ENCODE measurements at regions of chr1 and their contacts with region 1.

Region 1: GRCh38 chr1:153946622-153947241 is at the start of gene DENND4B:
- DNase-seq: no peak
- H3K4me3 ChIP-seq: peak within 1 kb of the TSS; percentile 86
- H3K27ac ChIP-seq: peak within 1 kb of the TSS; percentile 61
- H3K27me3 ChIP-seq: no peaks in the 10 kb centered on the region
- CTCF ChIP-seq: peak; percentile 90
- polyA plus RNA-seq, gene DENND4B: 10.3 and 13.3 TPM in 2 replicates

Region 2: DNA sequence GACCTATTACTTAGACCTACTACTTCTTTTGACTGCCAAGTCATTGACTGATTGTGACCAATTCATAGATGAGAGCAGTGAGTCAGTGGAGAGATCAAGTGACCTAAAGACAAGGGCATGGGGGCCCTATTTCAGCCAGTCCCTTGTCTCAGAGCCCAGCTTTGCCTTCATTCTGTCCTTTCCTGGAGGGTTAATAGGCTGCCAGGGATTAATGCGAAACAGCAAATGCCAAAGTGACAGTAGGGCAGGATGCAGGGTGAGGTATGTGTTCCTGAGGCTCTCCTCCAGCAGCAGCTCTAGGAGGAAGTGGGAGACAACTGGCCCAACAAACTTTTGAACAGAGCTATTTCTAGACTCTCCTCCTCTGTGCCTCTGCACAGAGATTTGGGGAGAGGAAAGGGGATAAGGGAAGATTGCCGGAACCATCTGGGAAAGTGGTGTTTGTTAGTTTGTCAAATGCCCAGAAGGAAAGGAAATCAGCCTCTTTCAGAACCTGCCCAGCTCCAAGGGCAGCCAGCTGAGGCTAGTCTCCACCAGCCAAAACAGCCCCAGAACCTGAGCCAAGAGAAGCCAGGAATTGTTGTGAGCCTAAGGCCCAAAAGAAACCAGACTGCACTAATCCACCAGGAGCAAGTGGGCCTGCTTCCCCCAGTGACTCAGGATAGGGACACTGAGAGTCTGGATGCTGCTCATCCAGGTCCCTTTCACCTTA is 392.7 kb before region 1 on chr1:
- CTCF ChIA-PET with region 1: interaction called, 10 read pairs
- POLR2A ChIA-PET with region 1: no interaction called
- DNase-seq: no peak
- H3K4me3 ChIP-seq: no peak overlapping the region
- H3K27ac ChIP-seq: peak overlapping the region; percentile 47
- H3K27me3 ChIP-seq: no peaks in the 10 kb centered on the region
- CTCF ChIP-seq: no peak

Region 3: DNA sequence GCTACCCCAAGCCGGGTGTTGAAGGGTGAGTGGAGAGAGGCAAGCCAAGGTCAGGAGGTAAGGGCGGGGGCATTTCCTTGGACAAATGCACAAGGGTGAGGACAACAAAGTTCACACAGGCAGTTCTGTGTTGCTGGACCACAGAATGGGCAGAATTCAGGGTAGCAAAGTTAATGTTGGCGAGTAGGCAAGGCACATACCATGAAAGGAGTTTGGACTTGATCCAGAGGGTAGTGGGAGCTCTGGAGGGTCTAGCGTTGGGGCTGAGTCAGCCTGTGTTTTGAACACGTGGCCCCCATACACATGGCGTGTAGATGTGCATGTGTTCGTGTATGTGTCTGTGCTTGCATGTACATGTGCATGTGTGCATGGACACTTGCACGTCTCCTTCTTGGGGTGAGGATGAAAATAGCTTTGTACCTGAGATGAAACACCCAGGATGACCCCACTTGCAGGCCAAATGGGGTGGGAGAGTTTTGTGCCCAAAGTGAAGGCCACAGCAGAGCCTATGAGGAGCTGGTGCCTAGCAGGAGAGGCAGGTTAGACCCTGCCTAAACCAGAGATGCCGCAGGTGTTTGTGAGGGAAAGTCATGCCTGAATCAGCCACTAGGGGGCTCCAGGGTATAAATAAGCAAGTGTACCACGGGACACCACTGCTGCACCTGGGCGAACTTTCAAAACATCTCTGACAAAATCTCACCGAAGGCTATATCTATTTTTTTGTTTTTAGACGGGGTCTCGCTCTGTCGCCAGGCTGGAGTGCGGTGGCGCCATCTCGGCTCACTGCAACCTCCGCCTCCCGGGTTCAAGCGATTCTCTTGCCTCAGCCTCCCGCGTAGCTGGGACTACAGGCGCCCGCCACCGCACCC is 149.7 kb before region 1 on chr1:
- CTCF ChIA-PET with region 1: interaction called, 19 read pairs
- POLR2A ChIA-PET with region 1: no interaction called
- DNase-seq: peak; percentile 21
- H3K4me3 ChIP-seq: no peak overlapping the region
- H3K27ac ChIP-seq: no peak overlapping the region
- H3K27me3 ChIP-seq: no peaks in the 10 kb centered on the region
- CTCF ChIP-seq: peak; percentile 82

Region 4: DNA sequence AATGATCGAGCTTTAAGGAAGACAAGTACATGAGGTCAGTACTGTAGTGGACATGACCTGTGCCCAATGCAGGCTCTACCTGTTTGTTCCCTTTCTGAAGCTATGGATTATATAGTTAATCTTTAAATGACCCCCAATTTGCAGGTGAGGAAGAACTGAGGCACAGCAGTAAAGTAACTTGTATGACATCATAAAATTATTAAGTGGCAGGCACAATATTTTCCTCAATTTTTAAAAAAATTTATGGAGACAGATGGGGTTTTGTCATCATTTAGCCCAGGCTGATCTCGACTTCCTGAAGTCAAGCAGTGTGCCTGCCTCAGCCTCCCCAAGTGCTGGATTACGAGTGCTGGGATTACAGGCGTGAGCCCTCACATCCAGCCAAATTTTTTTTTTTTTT is 20.3 kb before region 1 on chr1:
- CTCF ChIA-PET with region 1: interaction called, 10 read pairs
- POLR2A ChIA-PET with region 1: interaction called, 5 read pairs
- DNase-seq: no peak
- H3K4me3 ChIP-seq: no peak overlapping the region
- H3K27ac ChIP-seq: no peak overlapping the region
- H3K27me3 ChIP-seq: no peaks in the 10 kb centered on the region
- CTCF ChIP-seq: no peak

Region 5: GRCh38 chr1:153967082-153968000 is 20.6 kb after region 1 on chr1 and contains the start of gene CREB3L4:
- CTCF ChIA-PET with region 1: interaction called, 9 read pairs
- POLR2A ChIA-PET with region 1: interaction called, 11 read pairs
- DNase-seq: peak; percentile 93
- H3K4me3 ChIP-seq: peak within 1 kb of the TSS; percentile 75
- H3K27ac ChIP-seq: peak within 1 kb of the TSS; percentile 86
- H3K27me3 ChIP-seq: no peaks in the 10 kb centered on the region
- CTCF ChIP-seq: peak; percentile 49
- polyA plus RNA-seq, gene CREB3L4: 7.7 and 10.0 TPM in 2 replicates

Region 6: GRCh38 chr1:154167461-154167860 is 220.7 kb after region 1 on chr1:
- CTCF ChIA-PET with region 1: no interaction called
- POLR2A ChIA-PET with region 1: no interaction called
- DNase-seq: no peak
- H3K4me3 ChIP-seq: no peak overlapping the region
- H3K27ac ChIP-seq: no peak overlapping the region
- H3K27me3 ChIP-seq: no peaks in the 10 kb centered on the region
- CTCF ChIP-seq: no peak